Vagina (tissue), 2 donors: ENCODE measurements at regions of chr2 and their contacts with region 1.

Region 1: GRCh38 chr2:27019931-27020855 is 12.6 kb upstream of the TMEM214 start:
- DNase-seq: no peak
- H3K4me3 ChIP-seq: no peak overlapping the region
- H3K27ac ChIP-seq: no peak overlapping the region
- H3K4me1 ChIP-seq: peaks cover 26% of the 10 kb centered on the region
- H3K27me3 ChIP-seq: no peaks in the 10 kb centered on the region
- CTCF ChIP-seq: no peak
- POLR2A ChIP-seq: no peak

Region 2: DNA sequence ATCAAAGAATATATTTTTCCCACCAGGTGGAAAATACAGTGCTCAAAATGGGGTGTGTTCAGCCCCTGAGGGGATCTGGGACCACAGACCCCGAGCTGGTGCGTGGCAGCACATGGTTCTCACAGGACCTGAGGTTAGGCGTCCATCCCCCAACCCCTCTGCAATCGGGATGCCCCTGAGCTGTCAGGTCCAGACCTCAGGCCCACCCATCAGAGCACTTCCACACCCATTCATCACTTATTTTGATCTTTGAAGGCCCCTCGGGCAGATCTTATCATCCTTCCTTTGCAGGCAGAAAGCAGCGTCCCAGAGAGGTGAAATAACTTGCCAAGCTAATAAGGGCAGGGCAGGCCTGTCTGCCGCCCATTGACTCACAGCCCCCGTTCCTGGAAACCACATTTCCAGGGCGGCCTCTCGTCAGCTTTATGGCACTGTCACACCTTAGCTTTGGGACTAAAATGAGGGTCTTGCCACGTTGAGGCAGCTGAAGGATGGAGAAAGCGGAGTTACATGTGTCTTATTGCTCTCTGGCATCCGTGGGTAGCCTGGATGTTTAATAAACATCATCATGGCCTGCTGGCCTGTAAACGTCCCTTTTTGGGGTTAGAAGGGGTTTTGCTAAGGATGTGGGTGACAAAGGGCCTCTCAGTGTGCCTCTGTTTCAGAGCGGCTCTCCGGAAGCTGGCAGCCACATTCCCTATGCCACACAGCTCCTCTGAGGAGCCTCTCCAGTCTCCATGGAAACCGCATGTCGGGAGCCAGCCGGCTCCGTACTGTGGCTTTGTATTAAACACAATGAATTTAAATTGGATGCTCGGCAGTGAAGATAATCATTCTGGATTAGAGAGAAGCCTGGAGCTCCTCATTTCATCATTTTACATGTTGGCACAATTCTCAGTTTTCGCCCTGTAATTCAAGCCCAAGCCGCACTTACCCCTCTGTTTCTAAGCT is 108.0 kb before region 1 on chr2:
- intact Hi-C with region 1: no loop called
- DNase-seq: peak in 1 of 2 donors; percentile 16
- H3K4me3 ChIP-seq: no peak overlapping the region
- H3K27ac ChIP-seq: no peak overlapping the region
- H3K4me1 ChIP-seq: no peaks in the 10 kb centered on the region
- H3K27me3 ChIP-seq: no peaks in the 10 kb centered on the region
- CTCF ChIP-seq: no peak
- POLR2A ChIP-seq: no peak

Region 3: DNA sequence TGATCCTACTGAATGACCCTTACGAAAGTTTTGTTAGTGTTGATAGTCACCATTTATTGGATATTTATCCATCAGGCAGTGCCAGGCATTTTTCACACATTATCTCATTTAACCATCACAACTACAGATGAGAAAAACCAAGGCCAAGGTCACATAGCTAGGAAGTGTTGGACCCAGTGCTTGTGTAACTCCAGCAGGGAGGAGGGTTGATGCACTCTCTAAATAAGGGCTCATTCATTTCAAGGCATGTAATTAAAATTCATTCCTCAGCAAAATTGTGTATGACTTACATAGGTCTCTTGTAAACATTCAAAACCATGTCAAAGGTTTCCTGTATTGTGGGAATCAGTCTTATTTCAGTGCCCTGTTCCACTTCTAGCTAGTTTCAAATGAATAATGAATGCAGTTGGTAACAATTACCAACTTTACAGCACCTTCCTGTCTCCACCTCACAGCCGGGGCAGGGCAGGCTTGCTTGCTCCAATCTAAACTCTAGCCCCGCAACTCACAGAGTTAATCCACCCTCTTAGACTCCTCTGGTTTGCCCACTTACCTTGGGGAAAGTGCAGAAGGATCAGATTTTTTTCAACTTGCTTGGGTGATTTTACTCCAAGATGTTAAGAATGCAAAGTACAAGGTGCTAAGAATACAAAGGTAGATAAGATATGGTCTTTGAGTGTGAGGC is 55.6 kb before region 1 on chr2:
- intact Hi-C with region 1: loop called (anchors 2 kb)
- DNase-seq: no peak
- H3K4me3 ChIP-seq: no peak overlapping the region
- H3K27ac ChIP-seq: no peak overlapping the region
- H3K4me1 ChIP-seq: no peaks in the 10 kb centered on the region
- H3K27me3 ChIP-seq: no peaks in the 10 kb centered on the region
- CTCF ChIP-seq: no peak
- POLR2A ChIP-seq: no peak